ENCODE measurements at regions of chr22 and their contacts with region 1.

Region 1: DNA sequence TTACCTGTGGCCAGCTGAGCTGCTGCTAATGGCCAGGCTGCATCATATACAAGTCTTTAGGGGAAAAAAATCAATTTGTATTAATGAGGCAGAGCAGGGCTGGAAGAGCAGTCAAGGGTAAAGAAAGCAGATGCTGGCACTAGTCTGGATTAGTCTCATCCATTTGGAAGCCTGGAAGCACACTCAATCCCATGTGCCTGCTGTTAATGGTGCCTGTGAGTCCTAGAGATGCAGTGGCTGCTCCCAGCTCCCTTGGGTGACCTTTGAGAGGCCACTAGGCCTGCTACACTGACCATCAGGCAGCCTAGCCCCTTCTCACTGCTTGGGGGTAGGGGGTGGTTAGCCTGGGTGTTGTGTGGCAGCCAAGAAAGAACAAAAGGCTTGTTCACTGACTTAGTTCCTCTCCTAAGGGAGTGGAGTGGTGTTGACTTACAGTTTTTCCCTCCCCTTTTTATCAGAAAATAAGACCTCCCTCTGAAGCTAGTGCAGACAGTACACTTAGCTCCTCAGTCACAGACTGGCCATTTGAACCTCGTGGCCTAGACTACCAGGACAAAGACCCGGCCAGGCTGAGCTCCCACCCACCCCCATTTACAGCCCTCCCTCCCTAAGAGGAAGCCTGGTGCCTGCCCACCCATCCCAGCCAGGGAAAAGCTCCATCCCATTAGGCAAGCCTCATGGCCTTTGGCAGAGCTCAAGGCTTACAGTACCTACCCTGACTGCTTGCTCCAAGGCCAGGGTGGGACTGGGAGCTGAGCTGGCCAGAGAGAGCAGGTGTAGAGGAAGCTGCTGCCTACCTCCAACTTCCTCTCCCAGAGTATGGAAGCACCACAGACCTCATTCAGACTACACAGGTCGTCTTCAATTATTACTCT is 7.8 kb downstream of the PIK3IP1 start:
- DNase-seq: peak in 1 of 9 experiments; percentile 22
- ATAC-seq: no peak
- H3K4me3 ChIP-seq: peak overlapping the region in 1 of 2 experiments; percentile 19
- H3K4me3 Mint-ChIP-seq: peak overlapping the region; percentile 55
- H3K27ac ChIP-seq: peak overlapping the region; percentile 99
- H3K27ac Mint-ChIP-seq: peak overlapping the region; percentile 100
- H3K4me1 ChIP-seq: peaks cover 99% of the 10 kb centered on the region
- H3K4me1 Mint-ChIP-seq: peaks cover 93% of the 10 kb centered on the region
- H3K27me3 ChIP-seq: no peaks in the 10 kb centered on the region
- H3K27me3 Mint-ChIP-seq: no peaks in the 10 kb centered on the region
- CTCF ChIP-seq: no peak

Region 2: DNA sequence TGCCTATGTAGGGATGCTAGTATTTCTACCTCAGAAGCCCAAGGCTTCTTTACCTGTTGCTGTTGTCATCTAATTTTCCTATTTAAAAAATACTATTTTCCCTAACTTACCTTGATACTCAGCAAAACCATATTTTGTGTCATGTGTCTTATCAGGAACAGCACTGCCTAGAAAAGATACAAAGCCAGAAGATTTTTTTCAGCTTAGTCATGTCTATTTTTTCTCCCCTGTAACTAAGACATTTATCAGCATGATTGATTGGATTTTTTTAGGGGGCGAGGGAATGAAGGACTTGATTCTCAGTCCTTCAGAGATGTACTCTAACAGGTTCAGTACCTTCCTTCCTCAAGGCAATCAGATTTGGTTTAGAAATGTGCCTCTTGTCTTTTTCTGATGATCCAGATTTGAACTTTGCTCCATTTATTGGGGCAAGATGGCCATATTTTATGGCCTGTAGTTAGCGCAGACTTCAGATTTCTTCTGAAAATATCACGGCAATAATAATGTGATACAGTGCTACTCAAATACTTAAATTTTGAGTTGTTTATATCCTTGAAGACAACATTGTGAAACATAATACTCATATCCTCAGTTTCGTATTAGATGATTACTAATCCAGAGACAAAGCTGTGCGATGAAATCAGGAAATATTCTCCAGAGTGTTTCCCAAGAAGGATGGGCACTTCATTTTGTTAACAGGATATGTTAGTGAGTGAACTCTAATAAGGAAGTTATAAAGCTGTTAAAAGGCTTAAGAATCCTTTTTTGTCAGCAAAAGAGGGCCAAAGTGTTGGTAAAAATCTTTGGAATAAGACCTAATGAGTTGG is 11.5 kb after region 1 on chr22:
- CTCF ChIA-PET with region 1: interaction called, 22 read pairs
- POLR2A ChIA-PET with region 1: interaction called, 608 read pairs
- intact Hi-C with region 1: no loop called
- DNase-seq: no peak
- ATAC-seq: no peak
- H3K4me3 ChIP-seq: peak overlapping the region in 1 of 2 experiments; percentile 35
- H3K4me3 Mint-ChIP-seq: peak overlapping the region; percentile 76
- H3K27ac ChIP-seq: peak overlapping the region in 1 of 2 experiments; percentile 0
- H3K27ac Mint-ChIP-seq: peak overlapping the region; percentile 80
- H3K4me1 ChIP-seq: peaks cover 40% of the 10 kb centered on the region
- H3K4me1 Mint-ChIP-seq: peaks cover 58% of the 10 kb centered on the region
- H3K27me3 ChIP-seq: no peaks in the 10 kb centered on the region
- H3K27me3 Mint-ChIP-seq: no peaks in the 10 kb centered on the region
- CTCF ChIP-seq: no peak

Measured in CD8-positive, alpha-beta T cell (primary cell).